ENCODE measurements at regions of chr7 and their contacts with region 1.

Region 1: GRCh38 chr7:35707422-35707821 is 12.5 kb upstream of the HERPUD2 start:
- DNase-seq: no peak
- ATAC-seq: no peak
- H3K4me3 Mint-ChIP-seq: no peak overlapping the region
- H3K27ac Mint-ChIP-seq: no peak overlapping the region
- H3K4me1 Mint-ChIP-seq: peaks cover 32% of the 10 kb centered on the region
- H3K27me3 Mint-ChIP-seq: peaks cover 2% of the 10 kb centered on the region

Region 2: GRCh38 chr7:35519971-35520809 is 187.2 kb before region 1 on chr7:
- CTCF ChIA-PET with region 1: no interaction called
- POLR2A ChIA-PET with region 1: no interaction called
- DNase-seq: peak; percentile 76
- ATAC-seq: peak; percentile 77
- H3K4me3 Mint-ChIP-seq: no peak overlapping the region
- H3K27ac Mint-ChIP-seq: no peak overlapping the region
- H3K4me1 Mint-ChIP-seq: no peaks in the 10 kb centered on the region
- H3K27me3 Mint-ChIP-seq: peaks cover 28% of the 10 kb centered on the region

Region 3: DNA sequence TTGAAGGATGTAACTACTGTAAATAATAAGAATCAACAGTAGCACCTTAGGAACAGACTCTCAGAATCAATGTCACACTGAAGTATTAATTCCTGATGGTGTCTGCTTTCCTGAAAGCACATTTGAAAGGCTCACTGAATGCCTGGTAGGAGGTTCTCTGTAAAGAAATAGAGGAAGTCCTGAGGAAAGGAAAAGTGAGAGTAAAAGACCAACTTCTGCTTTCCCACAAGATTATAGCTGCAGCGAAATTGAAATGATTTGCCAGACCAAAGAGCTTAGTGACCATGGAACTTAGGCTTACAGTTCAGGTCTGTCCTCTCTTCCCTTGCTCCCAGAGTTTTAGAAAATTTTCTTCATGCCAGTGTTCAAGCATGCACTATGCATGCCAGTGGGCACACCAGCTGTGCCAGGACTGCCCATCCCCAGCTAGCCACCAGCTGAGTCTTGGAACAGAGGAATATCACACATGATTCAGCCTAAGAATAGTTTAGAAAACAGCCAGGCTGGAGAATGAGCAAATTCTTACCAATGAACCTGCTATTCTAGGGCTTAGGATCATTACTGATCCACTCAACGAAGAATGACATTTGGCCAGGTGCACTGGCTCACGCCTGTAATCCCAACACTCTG is 135.7 kb before region 1 on chr7:
- CTCF ChIA-PET with region 1: no interaction called
- POLR2A ChIA-PET with region 1: no interaction called
- DNase-seq: peak; percentile 3
- ATAC-seq: no peak
- H3K4me3 Mint-ChIP-seq: no peak overlapping the region
- H3K27ac Mint-ChIP-seq: no peak overlapping the region
- H3K4me1 Mint-ChIP-seq: no peaks in the 10 kb centered on the region
- H3K27me3 Mint-ChIP-seq: no peaks in the 10 kb centered on the region

Region 4: GRCh38 chr7:35658602-35659201 is 48.7 kb before region 1 on chr7:
- CTCF ChIA-PET with region 1: no interaction called
- POLR2A ChIA-PET with region 1: no interaction called
- DNase-seq: no peak
- ATAC-seq: no peak
- H3K4me3 Mint-ChIP-seq: no peak overlapping the region
- H3K27ac Mint-ChIP-seq: no peak overlapping the region
- H3K4me1 Mint-ChIP-seq: peaks cover 20% of the 10 kb centered on the region
- H3K27me3 Mint-ChIP-seq: no peaks in the 10 kb centered on the region

Region 5: GRCh38 chr7:35729061-35729783 is 21.8 kb after region 1 on chr7:
- CTCF ChIA-PET with region 1: interaction called, 144 read pairs
- POLR2A ChIA-PET with region 1: interaction called, 5 read pairs
- DNase-seq: peak; percentile 64
- ATAC-seq: peak; percentile 53
- H3K4me3 Mint-ChIP-seq: peak overlapping the region; percentile 34
- H3K27ac Mint-ChIP-seq: peak overlapping the region; percentile 78
- H3K4me1 Mint-ChIP-seq: peaks cover 62% of the 10 kb centered on the region
- H3K27me3 Mint-ChIP-seq: peaks cover 1% of the 10 kb centered on the region

Region 6: GRCh38 chr7:35761871-35762677 is 54.7 kb after region 1 on chr7:
- CTCF ChIA-PET with region 1: no interaction called
- POLR2A ChIA-PET with region 1: no interaction called
- DNase-seq: no peak
- ATAC-seq: no peak
- H3K4me3 Mint-ChIP-seq: no peak overlapping the region
- H3K27ac Mint-ChIP-seq: no peak overlapping the region
- H3K4me1 Mint-ChIP-seq: peaks cover 5% of the 10 kb centered on the region
- H3K27me3 Mint-ChIP-seq: peaks cover 12% of the 10 kb centered on the region

Measured in activated CD8-positive, alpha-beta T cell treated with anti-CD3 and anti-CD28 coated beads, Interleukin-2, amount 10 ng/mL, durations not matched to agents 7 days and 5 days (primary cell).